ENCODE measurements at regions of chr7 and their contacts with region 1.

Region 1: GRCh38 chr7:105352018-105352612 is 36.6 kb downstream of the SRPK2 start:
- DNase-seq: peak; percentile 77
- H3K4me3 Mint-ChIP-seq: no peak overlapping the region
- H3K27ac Mint-ChIP-seq: peak overlapping the region; percentile 85
- H3K4me1 Mint-ChIP-seq: peaks cover 64% of the 10 kb centered on the region
- H3K27me3 Mint-ChIP-seq: no peaks in the 10 kb centered on the region

Region 2: GRCh38 chr7:105187302-105188169 is 164.6 kb before region 1 on chr7:
- CTCF ChIA-PET with region 1: no interaction called
- intact Hi-C with region 1: no loop called
- DNase-seq: peak; percentile 34
- H3K4me3 Mint-ChIP-seq: no peak overlapping the region
- H3K27ac Mint-ChIP-seq: no peak overlapping the region
- H3K4me1 Mint-ChIP-seq: peaks cover 21% of the 10 kb centered on the region
- H3K27me3 Mint-ChIP-seq: no peaks in the 10 kb centered on the region

Region 3: GRCh38 chr7:105198223-105198622 is 153.9 kb before region 1 on chr7:
- CTCF ChIA-PET with region 1: no interaction called
- intact Hi-C with region 1: no loop called
- DNase-seq: no peak
- H3K4me3 Mint-ChIP-seq: no peak overlapping the region
- H3K27ac Mint-ChIP-seq: no peak overlapping the region
- H3K4me1 Mint-ChIP-seq: peaks cover 13% of the 10 kb centered on the region
- H3K27me3 Mint-ChIP-seq: no peaks in the 10 kb centered on the region

Region 4: DNA sequence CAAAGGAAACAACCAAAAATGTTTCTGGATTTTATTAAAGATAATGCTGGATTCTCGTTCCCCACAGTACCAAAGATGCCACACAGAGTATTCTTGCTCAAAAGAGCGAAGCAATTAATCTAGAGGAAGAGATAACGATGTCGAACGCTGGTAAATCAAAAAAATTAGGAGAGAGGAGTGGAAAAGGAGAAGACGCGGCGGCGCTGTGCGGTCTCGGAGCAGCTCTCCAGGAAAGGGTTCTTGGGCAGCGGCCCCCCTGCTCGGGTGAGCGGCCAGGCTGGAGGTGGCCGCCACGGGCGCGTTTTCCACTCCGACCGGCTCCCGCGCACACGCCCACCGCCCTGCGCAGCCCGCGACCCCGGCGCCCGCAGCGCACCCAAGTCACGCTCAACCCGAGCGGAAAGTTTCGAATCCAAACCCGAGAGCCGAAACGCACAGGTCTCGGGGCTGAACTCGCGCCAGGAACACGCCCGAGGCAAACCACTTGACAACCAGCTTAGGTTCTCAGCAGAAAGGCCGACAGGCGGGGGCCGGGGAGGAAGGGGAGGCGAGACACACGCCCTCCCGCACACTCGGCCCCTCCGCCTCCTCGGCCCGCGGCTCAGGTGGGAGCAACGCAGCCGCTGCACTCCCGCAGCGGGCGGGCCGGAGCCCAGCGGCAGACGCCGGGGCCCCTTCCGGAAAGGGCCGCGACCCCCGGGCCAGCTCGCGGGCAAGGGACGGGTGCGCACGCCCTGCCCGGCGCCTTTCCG is 35.7 kb after region 1 on chr7:
- CTCF ChIA-PET with region 1: interaction called, 3 read pairs
- intact Hi-C with region 1: loop called (anchors 1 kb)
- DNase-seq: peak; percentile 58
- H3K4me3 Mint-ChIP-seq: peak overlapping the region; percentile 85
- H3K27ac Mint-ChIP-seq: peak overlapping the region; percentile 65
- H3K4me1 Mint-ChIP-seq: peaks cover 32% of the 10 kb centered on the region
- H3K27me3 Mint-ChIP-seq: no peaks in the 10 kb centered on the region

Measured in activated naive CD4-positive, alpha-beta T cell treated with anti-CD3 and anti-CD28 coated beads for 36 hours (primary cell).